GM12878 (cell line): ENCODE measurements at regions of chr3 and their contacts with region 1.

Region 1: GRCh38 chr3:169668957-169669681 is 5.6 kb upstream of the MECOM start:
- DNase-seq: no peak
- ATAC-seq: peak; percentile 96
- H3K4me3 ChIP-seq: no peak overlapping the region
- H3K27ac ChIP-seq: no peak overlapping the region
- H3K4me1 ChIP-seq: no peaks in the 10 kb centered on the region
- H3K27me3 ChIP-seq: peaks cover 9 to 28% of the 10 kb centered on the region in 2 experiments
- CTCF ChIP-seq: peak; percentile 54 to 58 (median 56)
- EP300 ChIP-seq: no peak
- POLR2A ChIP-seq: no peak
- RAD21 ChIP-seq: peak; percentile 83

Region 2: DNA sequence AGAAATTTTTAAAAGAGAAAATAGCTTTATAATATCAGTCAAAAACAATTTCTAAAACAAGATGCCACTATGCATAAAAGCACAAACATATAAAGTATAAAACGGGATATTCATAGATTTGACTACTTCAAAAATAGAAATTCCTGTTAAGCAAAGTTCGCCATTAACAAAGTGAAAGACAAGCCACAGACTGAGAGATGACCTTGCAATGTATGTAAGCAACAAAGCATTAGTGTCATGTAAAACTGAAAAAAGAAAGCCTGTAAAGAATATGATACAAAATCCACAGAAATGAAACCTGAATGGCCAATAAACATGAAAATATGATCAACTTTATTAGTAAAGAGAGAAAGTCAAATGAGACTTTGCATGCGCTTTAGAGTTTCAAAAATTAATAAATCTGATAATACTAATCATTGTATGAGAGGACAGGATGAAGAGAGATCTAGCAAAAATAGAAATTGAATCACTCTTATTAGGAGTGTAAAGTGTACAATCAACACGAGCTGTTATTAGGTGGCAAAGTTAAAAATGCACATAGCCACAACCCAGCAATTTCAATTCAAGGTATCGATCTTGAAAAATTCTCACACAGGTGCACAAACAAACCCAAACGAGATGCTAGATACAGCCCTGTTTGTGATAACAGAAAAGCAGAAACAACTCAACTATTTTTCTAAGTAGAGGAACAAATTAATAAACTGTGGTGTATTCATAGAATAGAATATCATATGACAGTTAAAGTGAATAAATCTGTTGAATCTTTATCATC is 179.2 kb before region 1 on chr3:
- CTCF ChIA-PET with region 1: no interaction called
- POLR2A ChIA-PET with region 1: no interaction called
- RAD21 ChIA-PET with region 1: no interaction called
- SMC1A ChIA-PET with region 1: no interaction called
- in situ Hi-C with region 1: no loop called
- intact Hi-C with region 1: loop called (anchors 10 kb)
- DNase-seq: no peak
- ATAC-seq: no peak
- H3K4me3 ChIP-seq: no peak overlapping the region
- H3K27ac ChIP-seq: no peak overlapping the region
- H3K4me1 ChIP-seq: no peaks in the 10 kb centered on the region
- H3K27me3 ChIP-seq: no peaks in the 10 kb centered on the region; a peak in 1 of 4 replicates
- CTCF ChIP-seq: no peak
- EP300 ChIP-seq: no peak
- POLR2A ChIP-seq: no peak
- RAD21 ChIP-seq: no peak